Right ventricle myocardium superior (tissue), 1 donor: ENCODE measurements at regions of chr5 and their contacts with region 1.

Region 1: DNA sequence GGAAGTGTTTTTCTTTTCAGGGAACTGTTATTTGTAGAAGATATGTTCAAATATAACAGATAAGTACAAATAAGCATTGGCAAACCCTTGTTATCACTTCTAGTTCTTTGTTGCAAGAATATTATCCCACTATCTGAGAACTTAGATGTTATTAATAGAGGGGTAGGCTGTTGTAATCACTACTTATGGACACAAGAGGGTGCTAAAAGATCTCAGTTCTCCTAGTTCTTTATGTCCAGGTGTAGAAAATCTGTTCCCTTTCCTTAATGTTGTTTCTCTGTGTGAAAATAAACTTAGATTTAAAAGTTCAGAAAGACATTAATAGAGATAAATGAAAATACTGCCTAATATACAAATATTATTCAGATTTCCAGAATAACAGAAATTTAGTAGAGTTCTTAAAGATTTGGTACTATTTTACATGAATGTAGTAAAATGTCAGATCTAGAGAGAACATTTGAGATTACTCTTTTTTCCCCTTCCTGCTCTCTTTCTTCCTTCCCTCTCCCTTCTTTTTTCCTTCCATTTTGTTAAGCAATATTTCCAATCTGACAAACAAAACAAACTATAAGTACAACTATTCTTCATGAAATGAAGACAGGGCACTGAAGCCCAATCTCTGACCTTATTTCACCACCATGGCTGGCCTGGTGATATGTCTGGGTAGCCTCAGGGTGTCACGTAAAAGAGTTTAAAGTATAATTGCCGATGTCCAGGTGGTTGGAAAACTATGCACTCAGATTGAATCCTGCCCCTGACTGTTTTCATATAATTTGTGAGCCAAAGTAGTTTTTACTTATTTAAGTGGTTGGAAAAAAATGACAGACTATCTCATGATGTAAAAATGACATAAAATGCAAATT is 43.6 kb upstream of the C5orf46 start:
- DNase-seq: no peak
- ATAC-seq: peak; percentile 70

Region 2: GRCh38 chr5:147791181-147791580 is 158.8 kb before region 1 on chr5:
- intact Hi-C with region 1: no loop called
- DNase-seq: no peak
- ATAC-seq: no peak

Region 3: DNA sequence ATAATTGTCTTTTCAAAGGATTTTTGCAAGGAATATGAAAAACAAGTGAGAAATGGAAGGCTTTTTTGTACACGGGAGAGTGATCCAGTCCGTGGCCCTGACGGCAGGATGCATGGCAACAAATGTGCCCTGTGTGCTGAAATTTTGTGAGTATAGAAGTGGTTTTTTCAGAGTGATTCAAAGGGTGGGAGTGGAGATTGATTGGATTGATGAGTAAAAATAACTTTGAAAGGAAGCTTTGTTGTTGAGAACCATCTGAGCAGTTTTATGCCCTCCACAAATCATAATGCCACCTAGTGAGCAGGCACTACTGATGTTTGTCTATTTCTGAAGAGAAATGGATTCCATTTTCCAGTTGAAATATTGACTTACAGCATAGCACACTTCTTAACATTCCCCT is 144.4 kb after region 1 on chr5:
- intact Hi-C with region 1: no loop called
- DNase-seq: no peak
- ATAC-seq: no peak

Region 4: GRCh38 chr5:148107608-148108007 is 157.7 kb after region 1 on chr5:
- intact Hi-C with region 1: loop called (anchors 5 kb)
- DNase-seq: no peak
- ATAC-seq: no peak

Region 5: DNA sequence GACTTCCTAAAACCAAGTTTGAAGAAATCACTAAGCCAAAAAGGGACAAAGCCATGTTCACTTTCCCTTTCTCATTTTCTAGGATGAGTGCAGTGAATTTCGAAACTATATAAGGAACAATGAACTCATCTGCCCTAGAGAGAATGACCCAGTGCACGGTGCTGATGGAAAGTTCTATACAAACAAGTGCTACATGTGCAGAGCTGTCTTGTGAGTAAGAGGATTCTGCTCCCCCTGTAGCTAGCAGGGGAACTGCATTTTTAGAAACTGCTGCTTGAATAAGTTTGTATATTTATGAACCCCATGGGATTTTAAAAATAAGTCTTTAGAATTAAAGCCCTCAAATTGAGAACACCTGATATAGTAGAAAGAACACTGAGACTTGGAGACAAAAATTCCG is 175.7 kb after region 1 on chr5:
- intact Hi-C with region 1: loop called (anchors 5 kb)
- DNase-seq: no peak
- ATAC-seq: no peak